Thyroid gland (tissue), 4 donors: ENCODE measurements at regions of chr1 and their contacts with region 1.

Region 1: GRCh38 chr1:3796215-3797061 is at the start of gene LRRC47:
- DNase-seq: peak; percentile 94 to 95
- H3K4me3 ChIP-seq: peak within 1 kb of the TSS; percentile 45 to 93 (median 80)
- H3K27ac ChIP-seq: peak within 1 kb of the TSS in 2 of 3 donors; percentile 25 to 41
- H3K4me1 ChIP-seq: peaks cover 29 to 30% of the 10 kb centered on the region in 2 donors
- H3K27me3 ChIP-seq: no peaks in the 10 kb centered on the region
- CTCF ChIP-seq: no peak
- POLR2A ChIP-seq: peak in 1 of 2 donors; percentile 76
- total RNA-seq, gene LRRC47: 38.7 to 45.2 (median 43.7) TPM

Region 2: GRCh38 chr1:3577300-3577699 is 219.1 kb before region 1 on chr1:
- intact Hi-C with region 1: no loop called
- DNase-seq: peak; percentile 74 to 79
- H3K4me3 ChIP-seq: no peak overlapping the region
- H3K27ac ChIP-seq: no peak overlapping the region
- H3K4me1 ChIP-seq: peaks cover 0 to 9% of the 10 kb centered on the region in 2 donors
- H3K27me3 ChIP-seq: no peaks in the 10 kb centered on the region
- CTCF ChIP-seq: no peak
- POLR2A ChIP-seq: no peak

Region 3: DNA sequence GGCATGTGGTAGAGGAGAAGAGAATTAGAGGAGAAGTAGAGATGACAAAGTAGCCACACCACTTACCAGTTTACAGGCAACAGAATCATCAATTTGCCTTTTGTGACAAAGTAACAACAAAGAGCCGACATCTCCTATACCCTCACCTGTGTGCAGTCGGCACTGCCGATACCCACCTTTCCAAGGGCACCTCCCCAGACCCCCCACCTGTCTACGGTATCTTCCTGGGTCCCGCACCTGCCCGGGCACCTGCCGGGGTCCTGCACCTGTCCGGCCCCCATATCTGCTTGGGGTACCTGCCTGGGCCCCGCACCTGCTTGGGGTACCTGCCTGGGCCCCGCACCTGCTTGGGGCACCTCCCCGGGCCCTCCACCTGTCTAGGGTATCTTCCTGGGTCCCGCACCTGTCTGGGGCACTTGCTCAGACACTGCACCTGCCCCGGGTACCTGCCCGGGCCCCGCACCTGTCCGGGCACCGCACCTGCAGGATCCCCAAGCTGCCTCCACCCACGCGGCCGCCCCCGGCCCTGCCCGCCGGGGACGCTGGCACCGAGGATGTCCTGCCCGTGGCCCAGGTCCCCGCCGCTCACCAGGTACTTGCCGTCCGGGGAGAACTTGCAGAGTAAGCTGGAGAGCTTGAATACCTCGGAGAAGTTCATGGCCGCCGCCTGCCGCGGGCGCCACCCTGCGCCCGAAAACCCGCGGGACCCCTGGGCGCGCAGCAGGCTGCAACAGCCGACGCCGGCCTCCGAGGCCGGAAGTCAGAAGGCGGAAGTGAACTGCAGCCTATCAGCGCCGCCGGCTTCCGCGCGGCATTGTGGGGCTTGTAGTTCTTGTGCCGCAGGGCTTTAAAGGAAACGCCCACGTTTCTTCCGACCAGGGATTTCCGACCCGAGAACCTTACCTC is 146.8 kb before region 1 on chr1 and contains the start of gene WRAP73:
- intact Hi-C with region 1: loop called (anchors 10 kb)
- DNase-seq: peak; percentile 90
- H3K4me3 ChIP-seq: peak within 1 kb of the TSS; percentile 53 to 89 (median 84)
- H3K27ac ChIP-seq: peak within 1 kb of the TSS in 1 of 3 donors; percentile 50
- H3K4me1 ChIP-seq: peaks cover 26 to 38% of the 10 kb centered on the region in 2 donors
- H3K27me3 ChIP-seq: peaks cover 17% of the 10 kb centered on the region
- CTCF ChIP-seq: no peak
- POLR2A ChIP-seq: peak in 1 of 2 donors; percentile 85
- total RNA-seq, gene WRAP73: 18.5 to 44.0 (median 21.0) TPM

Region 4: GRCh38 chr1:3727042-3727824 is 69.2 kb before region 1 on chr1:
- intact Hi-C with region 1: loop called (anchors 5 kb)
- DNase-seq: peak; percentile 17 to 26
- H3K4me3 ChIP-seq: no peak overlapping the region
- H3K27ac ChIP-seq: no peak overlapping the region
- H3K4me1 ChIP-seq: peaks cover 0 to 12% of the 10 kb centered on the region in 2 donors
- H3K27me3 ChIP-seq: no peaks in the 10 kb centered on the region
- CTCF ChIP-seq: peak in 2 of 6 experiments; percentile 16 to 41
- POLR2A ChIP-seq: no peak